ENCODE measurements at regions of chr10 and their contacts with region 1.

Region 1: GRCh38 chr10:52488606-52489485 is 174.8 kb downstream of the DKK1 start:
- DNase-seq: no peak
- H3K4me3 ChIP-seq: no peak overlapping the region
- H3K27me3 ChIP-seq: no peaks in the 10 kb centered on the region
- CTCF ChIP-seq: peak; percentile 32

Region 2: GRCh38 chr10:52308251-52309031 is 180.4 kb before region 1 on chr10:
- CTCF ChIA-PET with region 1: interaction called, 77 read pairs
- POLR2A ChIA-PET with region 1: interaction called, 5 read pairs
- DNase-seq: no peak
- H3K4me3 ChIP-seq: peak overlapping the region; percentile 28
- H3K27me3 ChIP-seq: no peaks in the 10 kb centered on the region
- CTCF ChIP-seq: peak; percentile 68

Region 3: DNA sequence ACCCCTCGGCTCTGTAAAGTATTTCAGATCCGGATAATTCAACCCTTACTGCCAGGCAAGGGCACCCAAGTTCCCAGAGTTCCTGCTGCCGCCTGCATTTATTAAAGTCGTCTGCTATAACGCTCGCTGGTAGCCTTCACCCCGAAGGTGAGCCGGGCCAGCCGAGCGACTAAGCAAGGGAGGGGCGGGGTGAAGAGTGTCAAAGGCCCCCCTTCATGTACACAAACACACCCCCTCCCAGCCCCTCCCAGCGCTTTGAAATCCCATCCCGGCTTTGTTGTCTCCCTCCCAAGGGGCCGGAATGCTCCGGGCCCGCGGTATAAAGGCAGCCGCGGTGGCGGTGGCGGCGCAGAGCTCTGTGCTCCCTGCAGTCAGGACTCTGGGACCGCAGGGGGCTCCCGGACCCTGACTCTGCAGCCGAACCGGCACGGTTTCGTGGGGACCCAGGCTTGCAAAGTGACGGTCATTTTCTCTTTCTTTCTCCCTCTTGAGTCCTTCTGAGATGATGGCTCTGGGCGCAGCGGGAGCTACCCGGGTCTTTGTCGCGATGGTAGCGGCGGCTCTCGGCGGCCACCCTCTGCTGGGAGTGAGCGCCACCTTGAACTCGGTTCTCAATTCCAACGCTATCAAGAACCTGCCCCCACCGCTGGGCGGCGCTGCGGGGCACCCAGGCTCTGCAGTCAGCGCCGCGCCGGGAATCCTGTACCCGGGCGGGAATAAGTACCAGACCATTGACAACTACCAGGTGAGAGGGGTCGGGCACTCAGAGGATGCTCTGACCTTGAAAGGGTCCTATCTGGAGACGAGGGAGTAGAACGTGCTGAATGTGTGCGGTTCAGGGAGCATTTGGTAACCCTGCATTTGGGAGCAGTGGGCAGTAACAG is 174.7 kb before region 1 on chr10 and contains the start of gene DKK1:
- CTCF ChIA-PET with region 1: interaction called, 77 read pairs
- POLR2A ChIA-PET with region 1: interaction called, 20 read pairs
- DNase-seq: peak; percentile 44
- H3K4me3 ChIP-seq: peak within 1 kb of the TSS; percentile 97
- H3K27me3 ChIP-seq: no peaks in the 10 kb centered on the region
- CTCF ChIP-seq: peak; percentile 90
- polyA plus RNA-seq, gene DKK1: 575 and 1,028 TPM in 2 replicates

Region 4: DNA sequence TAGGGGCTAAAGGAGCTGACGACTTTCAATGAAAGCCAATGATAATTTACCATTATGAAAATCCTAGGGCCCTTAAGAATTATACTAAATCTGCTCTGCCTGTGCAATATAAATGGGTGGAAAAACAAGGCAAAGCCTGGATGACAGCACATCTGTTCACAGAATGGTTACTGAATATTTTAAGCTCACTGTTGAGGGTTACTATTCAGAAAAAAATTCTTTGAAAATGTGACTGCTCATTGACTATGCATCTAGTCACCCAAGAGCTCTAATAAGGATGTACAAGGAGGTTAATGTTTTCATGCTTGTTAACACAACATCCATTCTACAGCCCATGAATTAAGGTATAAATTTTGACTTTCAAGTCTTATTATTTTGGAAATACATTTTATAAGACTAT is 165.9 kb before region 1 on chr10:
- CTCF ChIA-PET with region 1: interaction called, 10 read pairs
- POLR2A ChIA-PET with region 1: interaction called, 18 read pairs
- DNase-seq: peak; percentile 33
- H3K4me3 ChIP-seq: no peak overlapping the region
- H3K27me3 ChIP-seq: no peaks in the 10 kb centered on the region
- CTCF ChIP-seq: no peak

Region 5: GRCh38 chr10:52443419-52444388 is 45.1 kb before region 1 on chr10:
- CTCF ChIA-PET with region 1: interaction called, 17 read pairs
- POLR2A ChIA-PET with region 1: interaction called, 3 read pairs
- DNase-seq: peak; percentile 90
- H3K4me3 ChIP-seq: no peak overlapping the region
- H3K27me3 ChIP-seq: no peaks in the 10 kb centered on the region
- CTCF ChIP-seq: no peak

Region 6: DNA sequence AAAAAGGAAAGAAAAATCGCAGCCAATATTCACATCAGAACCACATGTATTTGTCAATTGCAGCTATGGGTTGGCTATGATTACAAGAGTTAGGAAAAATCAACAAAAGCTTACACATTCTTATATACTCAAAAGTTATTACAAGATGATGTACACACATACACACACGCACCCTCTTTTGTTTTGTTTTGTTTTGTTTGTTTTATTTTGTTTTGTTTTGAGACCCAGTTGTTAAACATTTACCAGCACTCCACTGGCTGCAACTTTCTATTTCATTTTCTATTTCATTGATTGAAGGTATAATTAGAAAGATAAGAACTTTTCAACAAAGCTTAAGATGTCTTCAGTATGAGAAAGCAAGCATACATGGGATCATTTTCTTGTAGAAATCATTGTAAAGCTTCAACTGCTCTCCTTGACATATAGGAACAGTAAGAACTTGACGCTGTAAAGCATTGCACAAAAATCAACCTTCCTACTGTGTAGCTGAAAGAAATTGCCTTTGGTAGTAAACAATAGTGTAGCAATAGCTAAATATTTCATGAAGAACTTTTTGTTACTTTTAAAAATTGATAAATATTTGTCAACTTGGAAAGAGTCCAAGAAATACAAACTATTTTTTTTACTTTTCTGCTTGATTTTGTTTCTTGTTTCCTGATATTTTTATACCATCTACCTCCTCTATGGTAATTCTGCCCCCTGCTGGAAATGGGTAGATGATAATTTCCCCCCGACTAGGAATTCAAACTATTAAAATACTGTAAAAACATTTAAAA is 77.8 kb after region 1 on chr10:
- CTCF ChIA-PET with region 1: interaction called, 29 read pairs
- POLR2A ChIA-PET with region 1: no interaction called
- DNase-seq: no peak
- H3K4me3 ChIP-seq: no peak overlapping the region
- H3K27me3 ChIP-seq: no peaks in the 10 kb centered on the region
- CTCF ChIP-seq: peak; percentile 58

Measured in BJ (cell line).